CD8-positive, alpha-beta memory T cell (primary cell): ENCODE measurements at regions of chr3 and their contacts with region 1.

Region 1: DNA sequence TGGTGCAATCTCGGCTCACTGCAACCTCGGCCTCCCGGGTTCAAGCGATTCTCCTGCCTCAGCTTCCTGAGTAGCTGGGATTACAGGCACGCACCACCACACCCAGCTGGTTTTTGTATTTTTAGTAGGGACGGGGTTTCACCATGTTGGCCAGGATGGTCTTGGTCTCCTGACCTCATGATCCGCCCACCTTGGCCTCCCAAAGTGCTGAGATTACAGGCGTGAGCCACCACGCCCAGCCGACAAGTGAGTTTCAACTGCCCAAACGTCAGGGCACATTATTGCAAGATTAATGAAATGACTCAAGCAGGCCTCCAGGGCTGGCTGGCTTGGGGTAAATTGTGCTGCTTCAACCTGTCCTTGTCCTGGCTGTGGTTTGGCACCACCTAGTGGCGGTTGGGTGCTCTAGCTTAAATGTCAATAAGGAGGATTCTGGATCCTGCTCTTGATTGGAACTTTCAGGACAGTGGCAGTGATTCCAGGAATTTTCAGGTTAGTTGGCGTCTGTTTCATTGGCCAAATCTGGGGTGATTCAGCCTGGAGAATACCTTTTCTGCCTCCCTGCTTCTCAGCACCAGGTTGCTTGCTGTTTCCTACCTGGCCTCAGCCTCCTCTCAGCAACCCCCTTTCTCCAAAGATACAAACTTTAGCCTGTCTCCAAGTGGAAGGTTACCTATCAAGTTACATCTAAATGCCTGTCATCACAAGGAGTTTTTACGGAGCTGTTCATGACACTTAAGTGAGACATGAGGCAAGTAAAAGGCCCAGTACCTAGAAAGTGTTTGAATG is 32.4 kb upstream of the SACM1L start:
- DNase-seq: peak; percentile 70 to 89 (median 72)
- H3K4me3 ChIP-seq: no peak overlapping the region
- H3K4me3 Mint-ChIP-seq: no peak overlapping the region
- H3K27ac ChIP-seq: no peak overlapping the region
- H3K27ac Mint-ChIP-seq: peak overlapping the region in 2 of 8 donors; percentile 2 to 7
- H3K4me1 ChIP-seq: no peaks in the 10 kb centered on the region
- H3K4me1 Mint-ChIP-seq: peaks cover 15 to 39% (median 19%) of the 10 kb centered on the region in 3 donors
- H3K27me3 ChIP-seq: no peaks in the 10 kb centered on the region
- H3K27me3 Mint-ChIP-seq: no peaks in the 10 kb centered on the region

Region 2: GRCh38 chr3:45473841-45474240 is 182.9 kb before region 1 on chr3:
- CTCF ChIA-PET with region 1: no interaction called
- POLR2A ChIA-PET with region 1: no interaction called
- DNase-seq: no peak
- H3K4me3 ChIP-seq: no peak overlapping the region
- H3K4me3 Mint-ChIP-seq: no peak overlapping the region
- H3K27ac ChIP-seq: no peak overlapping the region
- H3K27ac Mint-ChIP-seq: no peak overlapping the region
- H3K4me1 ChIP-seq: no peaks in the 10 kb centered on the region
- H3K4me1 Mint-ChIP-seq: no peaks in the 10 kb centered on the region
- H3K27me3 ChIP-seq: no peaks in the 10 kb centered on the region
- H3K27me3 Mint-ChIP-seq: no peaks in the 10 kb centered on the region

Region 3: GRCh38 chr3:45509038-45509767 is 147.6 kb before region 1 on chr3:
- CTCF ChIA-PET with region 1: interaction called, 65 read pairs
- POLR2A ChIA-PET with region 1: no interaction called
- DNase-seq: no peak
- H3K4me3 ChIP-seq: no peak overlapping the region
- H3K4me3 Mint-ChIP-seq: no peak overlapping the region
- H3K27ac ChIP-seq: no peak overlapping the region
- H3K27ac Mint-ChIP-seq: no peak overlapping the region
- H3K4me1 ChIP-seq: peaks cover 15% of the 10 kb centered on the region
- H3K4me1 Mint-ChIP-seq: peaks cover 4 to 13% (median 7%) of the 10 kb centered on the region in 3 donors
- H3K27me3 ChIP-seq: no peaks in the 10 kb centered on the region
- H3K27me3 Mint-ChIP-seq: no peaks in the 10 kb centered on the region

Region 4: DNA sequence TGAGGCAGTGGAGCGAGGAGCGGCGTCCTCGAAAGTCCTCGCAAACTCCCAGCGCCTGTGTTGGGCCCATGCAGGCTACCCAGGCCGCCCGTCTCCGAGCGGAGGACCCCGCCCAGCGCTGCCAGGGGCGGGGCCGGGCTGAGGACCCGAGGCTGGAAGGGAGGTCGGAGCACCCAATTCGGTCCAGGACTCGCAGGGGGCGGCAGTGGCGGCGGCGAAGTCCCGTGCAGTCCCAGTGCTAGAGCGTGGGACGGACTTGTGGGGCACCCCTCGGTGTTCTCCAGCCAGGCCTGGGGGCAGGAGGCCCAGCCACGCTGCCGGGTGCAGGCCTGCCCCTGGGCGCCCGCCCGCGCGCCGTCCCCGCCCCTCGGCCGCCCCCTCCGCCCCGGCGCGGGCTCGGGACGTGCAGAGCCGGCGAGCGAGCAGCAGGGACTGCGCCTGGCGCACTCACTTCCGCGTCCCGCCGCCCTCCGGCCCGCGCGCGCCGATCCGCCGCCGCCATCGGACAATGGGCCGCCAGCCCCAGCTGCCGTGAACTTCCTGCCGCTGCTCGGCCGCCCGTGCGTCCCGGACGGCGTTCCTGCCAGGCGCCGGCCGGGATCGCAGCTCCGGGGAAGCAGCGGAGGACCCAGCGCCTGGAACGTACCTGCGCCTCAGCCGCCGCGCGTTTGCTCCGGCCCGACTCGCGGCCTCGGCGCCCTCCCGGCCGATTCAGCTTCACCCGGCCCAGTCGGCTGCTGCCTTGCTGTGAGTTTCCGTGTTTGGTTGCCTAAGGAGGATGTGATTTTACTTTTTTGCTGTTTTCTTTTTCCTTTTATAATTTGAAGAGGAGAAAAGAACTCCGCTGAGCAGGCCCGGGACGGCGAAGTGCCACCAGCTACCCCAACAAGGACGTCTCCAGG is 62.8 kb before region 1 on chr3:
- CTCF ChIA-PET with region 1: interaction called, 28 read pairs
- POLR2A ChIA-PET with region 1: no interaction called
- DNase-seq: peak; percentile 52 to 78 (median 72)
- H3K4me3 ChIP-seq: peak overlapping the region; percentile 72
- H3K4me3 Mint-ChIP-seq: peak overlapping the region; percentile 90 to 96 (median 93)
- H3K27ac ChIP-seq: peak overlapping the region; percentile 66
- H3K27ac Mint-ChIP-seq: peak overlapping the region; percentile 47 to 98 (median 89)
- H3K4me1 ChIP-seq: peaks cover 58% of the 10 kb centered on the region
- H3K4me1 Mint-ChIP-seq: peaks cover 49 to 60% (median 58%) of the 10 kb centered on the region in 3 donors
- H3K27me3 ChIP-seq: no peaks in the 10 kb centered on the region
- H3K27me3 Mint-ChIP-seq: no peaks in the 10 kb centered on the region

Region 5: DNA sequence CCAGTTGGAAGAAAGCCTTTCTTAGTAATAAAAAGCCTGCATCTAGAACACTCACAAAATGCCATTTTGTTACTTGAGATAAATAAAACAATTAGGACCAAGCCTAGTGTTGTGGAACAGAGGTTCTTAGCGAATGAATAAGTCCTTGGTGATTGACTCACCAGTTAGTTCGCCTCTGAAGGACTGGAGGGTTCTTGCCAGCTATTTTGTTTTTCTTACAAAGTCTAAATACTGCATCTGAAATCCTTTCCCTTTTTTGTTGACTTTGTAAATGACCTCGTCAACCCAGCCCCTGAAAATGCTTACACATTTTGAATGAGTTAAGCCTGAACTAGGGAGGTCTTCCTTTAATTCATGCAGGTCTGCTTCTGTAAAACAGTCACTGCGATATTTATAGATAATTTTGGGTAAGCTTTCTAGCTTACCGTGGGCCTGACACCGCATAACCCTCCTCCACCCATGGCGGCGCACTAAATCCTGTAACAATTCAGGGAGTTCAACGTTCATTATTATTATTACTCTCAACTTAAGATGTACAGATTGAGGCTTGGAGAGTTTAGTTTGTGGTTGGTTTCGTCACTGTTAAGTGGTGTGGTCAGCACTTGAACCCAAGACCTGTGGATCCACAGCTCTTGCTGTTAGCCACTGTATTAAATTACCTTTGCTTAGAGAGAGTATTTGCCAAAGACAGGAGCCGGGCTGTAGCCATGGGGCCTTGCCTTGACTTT is 12.5 kb before region 1 on chr3:
- CTCF ChIA-PET with region 1: interaction called, 14 read pairs
- POLR2A ChIA-PET with region 1: no interaction called
- DNase-seq: no peak
- H3K4me3 ChIP-seq: no peak overlapping the region
- H3K4me3 Mint-ChIP-seq: no peak overlapping the region
- H3K27ac ChIP-seq: no peak overlapping the region
- H3K27ac Mint-ChIP-seq: peak overlapping the region in 2 of 8 donors; percentile 8 to 25
- H3K4me1 ChIP-seq: no peaks in the 10 kb centered on the region
- H3K4me1 Mint-ChIP-seq: peaks cover 10 to 25% (median 23%) of the 10 kb centered on the region in 3 donors
- H3K27me3 ChIP-seq: no peaks in the 10 kb centered on the region
- H3K27me3 Mint-ChIP-seq: no peaks in the 10 kb centered on the region

Region 6: DNA sequence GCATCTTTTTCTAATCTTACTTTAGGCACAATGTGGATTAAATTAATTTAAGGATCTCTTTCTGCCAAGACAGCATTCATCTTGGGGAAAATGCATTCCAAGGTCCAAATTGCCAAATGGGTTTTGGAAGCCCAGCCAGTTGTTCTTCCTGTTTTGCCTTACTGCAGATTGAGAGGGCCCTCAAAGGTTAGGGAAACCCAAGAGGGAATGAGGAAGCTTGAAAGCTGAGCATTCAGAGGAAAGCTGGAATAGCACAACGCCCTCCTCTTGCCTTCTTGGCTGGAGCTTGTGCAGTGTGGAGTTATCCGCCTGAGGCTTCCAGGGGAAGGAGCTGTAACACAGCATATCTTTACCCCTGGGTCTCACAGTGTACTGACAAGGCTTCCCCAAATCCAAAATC is 14.2 kb after region 1 on chr3:
- CTCF ChIA-PET with region 1: interaction called, 24 read pairs
- POLR2A ChIA-PET with region 1: no interaction called
- DNase-seq: no peak
- H3K4me3 ChIP-seq: no peak overlapping the region
- H3K4me3 Mint-ChIP-seq: no peak overlapping the region
- H3K27ac ChIP-seq: no peak overlapping the region
- H3K27ac Mint-ChIP-seq: no peak overlapping the region
- H3K4me1 ChIP-seq: peaks cover 6% of the 10 kb centered on the region
- H3K4me1 Mint-ChIP-seq: peaks cover 0 to 14% (median 3%) of the 10 kb centered on the region in 3 donors
- H3K27me3 ChIP-seq: no peaks in the 10 kb centered on the region
- H3K27me3 Mint-ChIP-seq: peaks cover 0 to 1% of the 10 kb centered on the region in 2 donors

Region 7: GRCh38 chr3:45677033-45677433 is 20.3 kb after region 1 on chr3:
- CTCF ChIA-PET with region 1: interaction called, 24 read pairs
- POLR2A ChIA-PET with region 1: interaction called, 3 read pairs
- DNase-seq: peak; percentile 44 to 80 (median 61)
- H3K4me3 ChIP-seq: peak overlapping the region; percentile 43
- H3K4me3 Mint-ChIP-seq: peak overlapping the region; percentile 36 to 86 (median 74)
- H3K27ac ChIP-seq: no peak overlapping the region
- H3K27ac Mint-ChIP-seq: peak overlapping the region; percentile 93 to 98 (median 96)
- H3K4me1 ChIP-seq: peaks cover 21% of the 10 kb centered on the region
- H3K4me1 Mint-ChIP-seq: peaks cover 16 to 25% (median 23%) of the 10 kb centered on the region in 3 donors
- H3K27me3 ChIP-seq: no peaks in the 10 kb centered on the region
- H3K27me3 Mint-ChIP-seq: peaks cover 0 to 1% of the 10 kb centered on the region in 2 donors

Region 8: GRCh38 chr3:45688882-45689756 is 32.4 kb after region 1 on chr3 and contains the start of gene SACM1L:
- CTCF ChIA-PET with region 1: interaction called, 10 read pairs
- POLR2A ChIA-PET with region 1: no interaction called
- DNase-seq: peak; percentile 92 to 98 (median 97)
- H3K4me3 ChIP-seq: peak within 1 kb of the TSS; percentile 95
- H3K4me3 Mint-ChIP-seq: peak within 1 kb of the TSS; percentile 84 to 98 (median 90)
- H3K27ac ChIP-seq: peak within 1 kb of the TSS; percentile 93
- H3K27ac Mint-ChIP-seq: peak within 1 kb of the TSS; percentile 89 to 100 (median 98)
- H3K4me1 ChIP-seq: peaks cover 40% of the 10 kb centered on the region
- H3K4me1 Mint-ChIP-seq: peaks cover 57 to 66% (median 65%) of the 10 kb centered on the region in 3 donors
- H3K27me3 ChIP-seq: no peaks in the 10 kb centered on the region
- H3K27me3 Mint-ChIP-seq: peaks cover 4 to 9% of the 10 kb centered on the region in 2 donors
- total RNA-seq, gene SACM1L: 78.7 to 79.1 TPM

Region 9: GRCh38 chr3:45701172-45701867 is 44.6 kb after region 1 on chr3:
- CTCF ChIA-PET with region 1: no interaction called
- POLR2A ChIA-PET with region 1: no interaction called
- DNase-seq: no peak
- H3K4me3 ChIP-seq: no peak overlapping the region
- H3K4me3 Mint-ChIP-seq: peak overlapping the region in 2 of 7 donors; percentile 3 to 13
- H3K27ac ChIP-seq: no peak overlapping the region
- H3K27ac Mint-ChIP-seq: peak overlapping the region in 7 of 8 donors; percentile 10 to 89 (median 42)
- H3K4me1 ChIP-seq: peaks cover 11% of the 10 kb centered on the region
- H3K4me1 Mint-ChIP-seq: peaks cover 62 to 81% (median 68%) of the 10 kb centered on the region in 3 donors
- H3K27me3 ChIP-seq: no peaks in the 10 kb centered on the region
- H3K27me3 Mint-ChIP-seq: no peaks in the 10 kb centered on the region

Region 10: GRCh38 chr3:46110701-46111493 is 454.1 kb after region 1 on chr3:
- CTCF ChIA-PET with region 1: no interaction called
- POLR2A ChIA-PET with region 1: no interaction called
- DNase-seq: no peak
- H3K4me3 ChIP-seq: no peak overlapping the region
- H3K4me3 Mint-ChIP-seq: peak overlapping the region; percentile 5 to 74 (median 41)
- H3K27ac ChIP-seq: no peak overlapping the region
- H3K27ac Mint-ChIP-seq: peak overlapping the region in 6 of 8 donors; percentile 75 to 98 (median 86)
- H3K4me1 ChIP-seq: peaks cover 35% of the 10 kb centered on the region
- H3K4me1 Mint-ChIP-seq: peaks cover 59 to 64% (median 61%) of the 10 kb centered on the region in 3 donors
- H3K27me3 ChIP-seq: no peaks in the 10 kb centered on the region
- H3K27me3 Mint-ChIP-seq: no peaks in the 10 kb centered on the region